Natural killer cell (primary cell): ENCODE measurements at regions of chr10 and their contacts with region 1.

Region 1: DNA sequence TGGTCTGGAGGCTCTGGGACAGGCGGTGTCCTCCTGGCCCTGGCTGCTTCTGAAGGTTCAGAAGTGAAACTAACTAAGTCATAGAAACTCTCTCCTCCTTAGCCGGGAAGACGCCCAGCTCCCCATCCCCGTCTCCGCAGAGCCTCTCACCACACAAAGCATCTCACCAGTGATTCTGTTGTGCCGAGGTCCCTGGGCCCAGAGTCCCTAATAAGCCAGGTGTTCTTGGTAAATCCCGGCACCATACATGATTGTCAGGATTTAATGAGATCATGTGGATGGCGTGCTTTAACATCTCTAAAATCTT is 9.4 kb downstream of the HKDC1 start:
- DNase-seq: no peak
- ATAC-seq: peak in 2 of 3 donors; percentile 49 to 58
- H3K4me3 ChIP-seq: peak overlapping the region; percentile 46
- H3K4me3 Mint-ChIP-seq: peak overlapping the region; percentile 86
- H3K27ac ChIP-seq: peak overlapping the region; percentile 94
- H3K27ac Mint-ChIP-seq: peak overlapping the region; percentile 87 to 94
- H3K4me1 ChIP-seq: peaks cover 64% of the 10 kb centered on the region
- H3K4me1 Mint-ChIP-seq: peaks cover 60 to 82% of the 10 kb centered on the region in 2 donors
- H3K27me3 ChIP-seq: no peaks in the 10 kb centered on the region
- H3K27me3 Mint-ChIP-seq: peaks cover 0 to 19% of the 10 kb centered on the region in 2 donors
- CTCF ChIP-seq: no peak

Region 2: GRCh38 chr10:69004821-69005220 is 224.8 kb before region 1 on chr10:
- intact Hi-C with region 1: no loop called
- DNase-seq: peak in 1 of 2 donors; percentile 74
- ATAC-seq: peak; percentile 67 to 90 (median 72)
- H3K4me3 ChIP-seq: no peak overlapping the region
- H3K4me3 Mint-ChIP-seq: no peak overlapping the region
- H3K27ac ChIP-seq: no peak overlapping the region
- H3K27ac Mint-ChIP-seq: peak overlapping the region; percentile 50 to 60
- H3K4me1 ChIP-seq: no peaks in the 10 kb centered on the region
- H3K4me1 Mint-ChIP-seq: peaks cover 5 to 8% of the 10 kb centered on the region in 2 donors
- H3K27me3 ChIP-seq: no peaks in the 10 kb centered on the region
- H3K27me3 Mint-ChIP-seq: no peaks in the 10 kb centered on the region
- CTCF ChIP-seq: peak; percentile 79

Region 3: DNA sequence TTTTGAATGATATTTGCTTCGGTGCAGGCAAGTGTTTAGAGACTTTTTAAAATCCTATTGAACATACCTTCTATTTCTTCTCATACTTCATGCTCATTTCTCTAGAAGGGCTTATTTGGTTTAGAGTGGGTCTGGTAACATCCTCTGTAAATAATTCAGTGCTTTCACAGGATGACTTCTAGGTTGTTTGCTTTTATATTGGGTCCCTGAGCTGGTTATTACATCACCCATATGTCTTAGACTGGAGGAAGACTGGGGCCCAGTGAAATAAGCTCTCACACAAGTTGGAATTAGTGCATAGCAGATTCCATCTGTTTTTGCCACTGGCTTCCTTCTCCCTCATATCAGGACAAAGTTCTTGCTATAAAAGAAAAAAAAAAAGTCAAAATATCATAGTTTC is 43.1 kb before region 1 on chr10:
- intact Hi-C with region 1: no loop called
- DNase-seq: no peak
- ATAC-seq: no peak
- H3K4me3 ChIP-seq: no peak overlapping the region
- H3K4me3 Mint-ChIP-seq: no peak overlapping the region
- H3K27ac ChIP-seq: no peak overlapping the region
- H3K27ac Mint-ChIP-seq: peak overlapping the region; percentile 45 to 53
- H3K4me1 ChIP-seq: peaks cover 3% of the 10 kb centered on the region
- H3K4me1 Mint-ChIP-seq: peaks cover 24 to 43% of the 10 kb centered on the region in 2 donors
- H3K27me3 ChIP-seq: no peaks in the 10 kb centered on the region
- H3K27me3 Mint-ChIP-seq: no peaks in the 10 kb centered on the region
- CTCF ChIP-seq: no peak

Region 4: DNA sequence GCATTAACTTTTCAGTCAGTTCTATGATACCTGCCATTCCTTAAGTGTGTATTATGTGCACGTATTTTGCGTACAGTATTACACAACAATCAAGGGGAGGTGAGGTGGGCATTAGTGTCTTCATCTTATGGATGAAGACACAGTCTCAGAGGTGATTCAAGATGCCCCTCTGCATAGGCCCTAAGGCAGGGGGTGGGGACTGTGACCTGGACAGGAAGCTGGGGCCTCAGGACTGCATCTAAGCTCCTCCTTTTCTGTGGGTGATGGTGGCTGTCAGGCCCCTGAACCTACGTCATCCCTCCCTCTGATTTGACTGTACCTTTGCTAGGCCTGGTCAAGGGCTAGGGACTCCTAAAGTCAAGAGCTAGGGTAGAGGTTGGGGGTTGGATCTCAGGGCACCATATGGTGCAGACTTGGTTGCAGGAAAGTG is 87.6 kb after region 1 on chr10:
- intact Hi-C with region 1: loop called (anchors 2 kb)
- DNase-seq: peak in 1 of 2 donors; percentile 28
- ATAC-seq: peak in 1 of 3 donors; percentile 11
- H3K4me3 ChIP-seq: no peak overlapping the region
- H3K4me3 Mint-ChIP-seq: peak overlapping the region; percentile 79
- H3K27ac ChIP-seq: peak overlapping the region; percentile 79
- H3K27ac Mint-ChIP-seq: peak overlapping the region; percentile 70 to 93
- H3K4me1 ChIP-seq: peaks cover 35% of the 10 kb centered on the region
- H3K4me1 Mint-ChIP-seq: peaks cover 32 to 39% of the 10 kb centered on the region in 2 donors
- H3K27me3 ChIP-seq: no peaks in the 10 kb centered on the region
- H3K27me3 Mint-ChIP-seq: no peaks in the 10 kb centered on the region
- CTCF ChIP-seq: no peak